ENCODE measurements at regions of chr6 and their contacts with region 1.

Region 1: GRCh38 chr6:134097114-134097707 is 44.8 kb upstream of the SLC2A12 start:
- DNase-seq: peak in 1 of 2 donors; percentile 34
- ATAC-seq: peak in 1 of 2 donors; percentile 81
- H3K4me3 ChIP-seq: no peak overlapping the region
- H3K27ac ChIP-seq: no peak overlapping the region
- H3K4me1 ChIP-seq: no peaks in the 10 kb centered on the region
- H3K27me3 ChIP-seq: no peaks in the 10 kb centered on the region
- CTCF ChIP-seq: peak; percentile 50 to 67 (median 65)
- POLR2A ChIP-seq: no peak

Region 2: DNA sequence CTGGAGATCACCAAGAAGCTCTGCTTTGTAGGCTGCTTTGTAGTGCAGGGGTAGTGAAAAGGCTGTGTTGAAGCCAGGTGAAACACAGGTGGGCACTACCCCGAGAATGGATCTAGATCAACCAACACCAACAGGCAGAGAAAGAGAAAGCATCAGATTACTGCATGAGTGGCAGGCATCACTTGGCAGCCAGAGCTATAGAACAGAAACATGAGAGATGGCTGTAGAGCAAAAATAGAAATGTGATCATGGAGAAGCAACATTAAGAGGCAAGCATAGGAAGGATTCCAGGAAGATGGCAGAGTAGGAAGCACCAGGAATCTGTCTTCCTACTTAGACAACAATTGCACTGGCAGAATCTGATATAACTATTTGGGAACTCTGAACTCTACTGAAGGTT is 519.4 kb before region 1 on chr6:
- in situ Hi-C with region 1: loop called in 2 of 4 experiments (anchors 10 to 25 kb)
- intact Hi-C with region 1: no loop called
- DNase-seq: peak; percentile 17 to 59
- ATAC-seq: peak; percentile 97 to 99
- H3K4me3 ChIP-seq: no peak overlapping the region
- H3K27ac ChIP-seq: peak overlapping the region; percentile 4 to 61 (median 26)
- H3K4me1 ChIP-seq: peaks cover 5 to 10% of the 10 kb centered on the region in 2 donors
- H3K27me3 ChIP-seq: no peaks in the 10 kb centered on the region
- CTCF ChIP-seq: no peak
- POLR2A ChIP-seq: no peak

Region 3: DNA sequence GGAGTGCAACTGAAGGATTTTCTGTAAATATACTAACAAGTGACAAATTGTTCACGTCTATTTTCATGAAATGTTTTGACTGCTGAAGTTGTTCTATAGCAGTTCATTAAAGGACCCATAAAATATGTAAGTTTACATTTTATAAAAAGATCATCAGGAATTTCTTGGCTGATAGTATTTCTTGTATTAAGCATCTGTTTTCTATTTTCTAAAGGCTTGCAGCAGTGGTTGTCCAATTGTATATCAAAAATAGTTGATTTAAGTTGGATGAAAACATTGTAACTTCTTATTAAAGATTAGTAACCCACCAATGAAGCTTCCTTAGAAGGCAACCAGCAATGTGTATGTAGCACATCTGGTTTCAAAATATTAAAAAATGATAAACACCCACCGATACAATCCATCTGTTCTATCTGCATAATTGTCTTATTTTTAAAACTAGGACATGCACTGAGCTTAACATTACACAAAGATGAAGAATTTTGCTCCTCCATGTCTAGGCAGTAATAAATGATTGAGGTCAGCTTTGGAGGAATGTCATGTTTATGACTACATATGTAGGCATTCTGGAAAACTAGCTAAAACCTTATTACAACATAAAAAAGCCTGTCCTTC is 509.6 kb before region 1 on chr6:
- in situ Hi-C with region 1: loop called in 1 of 4 experiments (anchors 25 kb)
- intact Hi-C with region 1: no loop called
- DNase-seq: no peak
- ATAC-seq: no peak
- H3K4me3 ChIP-seq: no peak overlapping the region
- H3K27ac ChIP-seq: no peak overlapping the region
- H3K4me1 ChIP-seq: no peaks in the 10 kb centered on the region
- H3K27me3 ChIP-seq: no peaks in the 10 kb centered on the region
- CTCF ChIP-seq: no peak
- POLR2A ChIP-seq: no peak

Region 4: GRCh38 chr6:134007077-134007476 is 90.1 kb before region 1 on chr6:
- in situ Hi-C with region 1: no loop called
- intact Hi-C with region 1: no loop called
- DNase-seq: peak in 1 of 2 donors; percentile 22
- ATAC-seq: no peak
- H3K4me3 ChIP-seq: no peak overlapping the region
- H3K27ac ChIP-seq: no peak overlapping the region
- H3K4me1 ChIP-seq: peaks cover 0 to 4% of the 10 kb centered on the region in 2 donors
- H3K27me3 ChIP-seq: no peaks in the 10 kb centered on the region
- CTCF ChIP-seq: no peak
- POLR2A ChIP-seq: no peak

Region 5: DNA sequence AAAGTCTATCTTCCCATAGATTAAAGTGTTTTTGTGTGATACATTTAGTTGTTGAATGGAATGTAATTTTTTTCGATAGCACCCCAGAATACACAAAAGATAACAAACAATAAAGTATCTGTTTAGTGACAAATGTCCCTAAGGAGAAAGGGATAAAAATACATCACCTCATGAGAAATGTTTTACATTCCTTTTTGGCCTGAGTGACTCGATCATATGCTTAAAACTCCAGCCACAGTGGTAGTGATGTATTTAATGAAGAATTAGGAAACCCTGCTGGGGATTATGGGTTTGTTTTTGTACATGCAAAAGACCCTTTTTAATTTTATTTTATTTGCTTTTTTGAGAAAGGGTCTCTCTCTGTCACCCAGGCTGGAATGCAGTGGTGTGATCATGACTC is 225.0 kb after region 1 on chr6:
- in situ Hi-C with region 1: no loop called
- intact Hi-C with region 1: no loop called
- DNase-seq: no peak
- ATAC-seq: no peak
- H3K4me3 ChIP-seq: no peak overlapping the region
- H3K27ac ChIP-seq: no peak overlapping the region
- H3K4me1 ChIP-seq: peaks cover 4 to 12% of the 10 kb centered on the region in 2 donors
- H3K27me3 ChIP-seq: no peaks in the 10 kb centered on the region
- CTCF ChIP-seq: no peak
- POLR2A ChIP-seq: no peak